Esophagus muscularis mucosa (tissue), 4 donors: ENCODE measurements at regions of chr5 and their contacts with region 1.

Region 1: GRCh38 chr5:139147483-139148087 is 50.6 kb downstream of the SIL1 start:
- DNase-seq: no peak
- H3K4me3 ChIP-seq: no peak overlapping the region
- H3K27ac ChIP-seq: peak overlapping the region; percentile 42 to 66 (median 54)
- H3K4me1 ChIP-seq: peaks cover 38 to 58% (median 55%) of the 10 kb centered on the region in 4 donors
- H3K27me3 ChIP-seq: no peaks in the 10 kb centered on the region
- CTCF ChIP-seq: no peak
- EP300 ChIP-seq: no peak
- POLR2A ChIP-seq: no peak

Region 2: GRCh38 chr5:139186752-139187659 is 39.4 kb after region 1 on chr5:
- intact Hi-C with region 1: loop called (anchors 5 kb)
- DNase-seq: no peak
- H3K4me3 ChIP-seq: no peak overlapping the region
- H3K27ac ChIP-seq: peak overlapping the region in 1 of 4 donors; percentile 27
- H3K4me1 ChIP-seq: peaks cover 29 to 79% (median 65%) of the 10 kb centered on the region in 4 donors
- H3K27me3 ChIP-seq: no peaks in the 10 kb centered on the region
- CTCF ChIP-seq: no peak
- EP300 ChIP-seq: no peak
- POLR2A ChIP-seq: no peak

Region 3: GRCh38 chr5:139378101-139378835 is 230.7 kb after region 1 on chr5:
- intact Hi-C with region 1: no loop called
- DNase-seq: no peak
- H3K4me3 ChIP-seq: no peak overlapping the region
- H3K27ac ChIP-seq: no peak overlapping the region
- H3K4me1 ChIP-seq: peaks cover 6 to 25% (median 14%) of the 10 kb centered on the region in 4 donors
- H3K27me3 ChIP-seq: no peaks in the 10 kb centered on the region
- CTCF ChIP-seq: no peak
- EP300 ChIP-seq: no peak
- POLR2A ChIP-seq: no peak